HCT116 (cell line): ENCODE measurements at regions of chr11 and their contacts with region 1.

Region 1: DNA sequence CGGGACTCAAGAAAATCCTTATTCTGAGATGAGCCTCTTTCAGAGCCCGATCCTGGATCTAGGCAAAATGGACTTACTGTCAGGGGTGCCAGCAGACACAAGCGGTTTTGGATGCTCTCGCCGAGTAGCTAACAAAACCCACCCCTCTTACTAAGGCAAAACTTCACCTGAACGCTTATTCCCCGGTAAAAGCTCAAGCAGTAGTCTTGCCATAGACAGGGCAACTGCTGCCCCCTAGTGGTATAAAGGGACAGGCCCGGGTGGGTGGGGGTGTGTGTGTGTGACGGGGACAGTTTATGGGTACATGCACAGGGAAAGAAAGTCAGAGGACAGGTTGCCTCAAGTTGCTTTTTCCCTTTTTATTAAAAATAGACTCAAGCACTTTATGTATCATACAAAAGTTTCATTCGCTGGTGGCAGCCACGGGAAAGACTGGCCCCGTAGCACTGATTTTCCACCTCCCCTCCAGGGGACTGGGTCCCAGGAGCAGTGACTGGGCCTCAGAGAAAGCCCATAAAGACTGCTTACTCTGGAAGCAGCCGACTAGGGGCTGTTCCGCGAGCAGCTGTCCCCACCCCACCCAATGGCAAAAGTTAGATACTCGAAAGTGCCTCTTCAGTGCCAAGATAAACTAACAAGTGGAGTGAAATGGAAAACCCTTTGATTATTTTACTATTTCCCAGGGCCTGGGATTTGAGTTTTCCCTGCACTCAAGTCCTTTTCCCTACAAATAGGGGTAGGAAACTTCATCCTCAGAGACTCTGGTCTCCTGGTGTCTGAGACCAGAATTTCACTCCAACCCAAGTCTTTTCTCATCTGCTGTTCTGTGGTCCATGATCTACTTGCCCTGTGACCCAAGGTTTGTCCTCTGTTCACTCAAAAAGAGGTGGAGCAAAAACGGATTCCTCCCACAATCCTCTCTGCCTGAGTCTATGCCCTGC is 4.7 kb downstream of the YPEL4 start:
- DNase-seq: peak; percentile 71
- ATAC-seq: peak; percentile 88
- H3K4me3 ChIP-seq: no peak overlapping the region
- H3K27ac ChIP-seq: no peak overlapping the region
- H3K4me1 ChIP-seq: peaks cover 0 to 22% of the 10 kb centered on the region in 2 experiments; a peak in 3 of 4 replicates
- H3K27me3 ChIP-seq: peaks cover 12% of the 10 kb centered on the region; the same call in 1 of the 2 replicates
- CTCF ChIP-seq: peak; percentile 77 to 96 (median 90)
- POLR2A ChIP-seq: no peak
- RAD21 ChIP-seq: peak; percentile 79

Region 2: DNA sequence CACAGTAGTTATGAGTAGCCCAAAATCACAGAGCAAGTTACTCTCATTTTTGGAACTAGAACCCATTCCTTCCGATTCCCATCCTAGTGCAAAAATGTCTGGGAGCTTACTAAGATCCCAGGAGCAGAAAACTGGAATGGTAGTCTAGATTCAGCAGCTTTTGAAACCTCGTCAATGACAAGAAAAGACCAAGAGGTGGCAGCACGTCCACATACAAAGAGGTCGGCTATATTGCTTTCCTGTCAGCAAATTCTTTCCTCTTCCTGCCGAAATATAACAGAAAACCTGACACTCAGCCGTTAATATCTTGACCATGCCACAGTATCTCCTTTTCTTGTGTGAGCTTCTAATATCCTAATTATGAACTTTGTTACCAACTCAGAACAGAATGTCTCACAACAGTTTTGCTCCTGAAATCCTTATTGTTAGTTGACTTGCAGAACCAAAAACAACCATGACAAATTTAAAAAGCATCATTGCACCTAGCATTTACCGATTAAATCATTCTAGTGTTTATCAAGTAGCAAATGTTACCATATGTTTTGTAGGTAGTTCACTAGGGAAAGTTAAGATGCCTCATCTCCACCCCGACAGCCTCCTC is 803.7 kb before region 1 on chr11:
- CTCF ChIA-PET with region 1: no interaction called
- POLR2A ChIA-PET with region 1: no interaction called
- RAD21 ChIA-PET with region 1: no interaction called
- intact Hi-C with region 1: loop called (anchors 10 kb)
- DNase-seq: peak; percentile 27
- ATAC-seq: peak; percentile 57
- H3K4me3 ChIP-seq: no peak overlapping the region
- H3K27ac ChIP-seq: no peak overlapping the region
- H3K4me1 ChIP-seq: no peaks in the 10 kb centered on the region
- H3K27me3 ChIP-seq: no peaks in the 10 kb centered on the region
- CTCF ChIP-seq: peak; percentile 35 to 65 (median 54); a peak in 5 of 6 replicates
- POLR2A ChIP-seq: no peak
- RAD21 ChIP-seq: peak; percentile 68

Region 3: GRCh38 chr11:57456960-57457642 is 187.9 kb before region 1 on chr11:
- CTCF ChIA-PET with region 1: interaction called, 36 read pairs
- POLR2A ChIA-PET with region 1: interaction called, 5 read pairs
- RAD21 ChIA-PET with region 1: interaction called, 3 to 5 read pairs
- intact Hi-C with region 1: loop called (anchors 1 kb)
- DNase-seq: peak; percentile 79
- ATAC-seq: peak; percentile 71
- H3K4me3 ChIP-seq: peak overlapping the region in 1 of 2 experiments; percentile 67; a peak in 2 of 4 replicates
- H3K27ac ChIP-seq: no peak overlapping the region
- H3K4me1 ChIP-seq: peaks cover 16 to 42% of the 10 kb centered on the region in 2 experiments; a peak in 3 of 4 replicates
- H3K27me3 ChIP-seq: peaks cover 3% of the 10 kb centered on the region; the same call in 1 of the 2 replicates
- CTCF ChIP-seq: peak; percentile 89 to 99 (median 89)
- POLR2A ChIP-seq: no peak
- RAD21 ChIP-seq: peak; percentile 94

Region 4: DNA sequence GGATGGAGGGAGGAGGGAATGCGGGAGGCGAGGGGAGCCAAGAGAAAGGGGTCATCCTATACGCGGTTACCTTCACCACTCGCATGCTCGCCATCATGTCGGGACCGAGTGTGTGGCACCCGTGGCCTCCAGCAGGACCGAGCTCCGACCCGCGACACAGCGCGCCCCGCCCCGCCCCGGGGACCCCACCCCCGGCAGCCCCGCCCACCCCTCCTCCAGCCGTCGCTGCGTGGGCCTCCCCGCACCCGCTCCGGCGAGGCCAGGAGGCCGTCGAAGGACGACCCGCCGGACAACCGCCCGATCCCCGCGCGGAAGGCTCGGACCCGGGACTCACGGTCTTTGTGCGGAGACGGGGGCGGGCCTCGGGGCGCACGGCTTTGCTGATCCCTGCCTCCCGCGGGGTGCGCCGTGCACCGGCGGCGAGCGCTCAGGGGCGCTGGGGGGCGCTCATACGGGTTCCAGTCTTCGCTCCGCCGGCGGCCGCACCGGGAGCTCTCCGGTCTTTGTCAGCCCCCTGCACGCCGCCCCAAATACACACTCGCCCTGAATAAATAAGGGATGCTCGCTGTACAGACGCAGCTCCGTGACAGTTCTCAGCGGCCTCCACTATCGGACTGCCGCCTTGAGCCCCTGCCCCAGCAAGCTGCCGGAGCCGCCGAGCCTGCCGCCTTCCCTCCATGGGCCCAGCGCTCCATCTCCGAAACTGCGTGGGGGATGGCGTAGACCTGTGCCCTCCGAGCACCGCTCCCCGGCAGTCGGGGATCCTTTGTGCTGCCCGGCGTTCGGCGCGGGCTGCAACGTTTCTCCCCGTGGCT is 77.3 kb before region 1 on chr11 and contains the start of gene UBE2L6:
- CTCF ChIA-PET with region 1: interaction called, 40 read pairs
- POLR2A ChIA-PET with region 1: interaction called, 8 read pairs
- RAD21 ChIA-PET with region 1: interaction called, 8 to 9 read pairs
- intact Hi-C with region 1: loop called (anchors 1 kb)
- DNase-seq: no peak
- ATAC-seq: peak; percentile 87
- H3K4me3 ChIP-seq: peak within 1 kb of the TSS; percentile 66 to 73
- H3K27ac ChIP-seq: peak within 1 kb of the TSS; percentile 67
- H3K4me1 ChIP-seq: peaks cover 7 to 19% of the 10 kb centered on the region in 2 experiments; a peak in 3 of 4 replicates
- H3K27me3 ChIP-seq: no peaks in the 10 kb centered on the region
- CTCF ChIP-seq: no peak; a peak in 2 of 6 replicates
- POLR2A ChIP-seq: no peak
- RAD21 ChIP-seq: no peak
- total RNA-seq, gene UBE2L6: 24.8 TPM

Region 5: GRCh38 chr11:57657194-57658022 is 12.4 kb after region 1 on chr11 and contains the start of gene CLP1:
- CTCF ChIA-PET with region 1: interaction called, 11 read pairs
- POLR2A ChIA-PET with region 1: no interaction called
- RAD21 ChIA-PET with region 1: no interaction called
- intact Hi-C with region 1: no loop called
- DNase-seq: peak; percentile 98
- ATAC-seq: peak; percentile 98
- H3K4me3 ChIP-seq: peak within 1 kb of the TSS; percentile 83 to 97
- H3K27ac ChIP-seq: peak within 1 kb of the TSS; percentile 35; the same call in 1 of the 2 replicates
- H3K4me1 ChIP-seq: peaks cover 7 to 11% of the 10 kb centered on the region in 2 experiments; a peak in 3 of 4 replicates
- H3K27me3 ChIP-seq: no peaks in the 10 kb centered on the region
- CTCF ChIP-seq: no peak
- POLR2A ChIP-seq: no peak
- RAD21 ChIP-seq: no peak
- total RNA-seq, gene CLP1: 17.7 TPM